Activated T-helper 2 cell treated with anti-CD3 and anti-CD28 coated beads, Interferon-gamma antibody, Interleukin-2, Interleukin-4, amounts not matched to agents 10 μg/mL and 5 μg/mL and 100 μg/mL, durations not matched to agents 14 hours and 24 hours and 36 hours (primary cell): ENCODE measurements at regions of chr11 and their contacts with region 1.

Region 1: GRCh38 chr11:128859563-128860441 is 7.3 kb downstream of the KCNJ1 start:
- DNase-seq: peak; percentile 63
- H3K4me3 Mint-ChIP-seq: no peak overlapping the region
- H3K27ac Mint-ChIP-seq: no peak overlapping the region
- H3K4me1 Mint-ChIP-seq: peaks cover 7% of the 10 kb centered on the region
- H3K27me3 Mint-ChIP-seq: peaks cover 19% of the 10 kb centered on the region

Region 2: DNA sequence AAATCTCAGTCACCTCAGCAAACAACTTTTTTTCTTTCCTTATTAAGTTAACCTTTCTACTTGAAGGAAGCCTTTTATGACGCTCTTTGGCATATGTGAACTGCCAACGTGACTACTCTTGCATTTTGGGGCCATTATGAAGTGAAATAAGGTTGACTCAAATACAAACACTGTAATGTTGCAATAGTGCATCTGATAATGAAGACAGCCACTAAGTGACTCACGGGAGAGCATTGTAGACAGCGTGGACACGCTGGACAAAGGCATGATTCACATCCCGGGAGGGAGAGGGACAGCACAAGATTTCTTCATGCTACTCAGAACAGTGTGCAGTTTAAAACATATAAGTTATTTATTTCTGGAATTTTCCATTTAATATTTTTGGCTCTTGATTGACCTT is 833.2 kb before region 1 on chr11:
- intact Hi-C with region 1: loop called (anchors 1 kb)
- DNase-seq: no peak
- H3K4me3 Mint-ChIP-seq: no peak overlapping the region
- H3K27ac Mint-ChIP-seq: no peak overlapping the region
- H3K4me1 Mint-ChIP-seq: peaks cover 11% of the 10 kb centered on the region
- H3K27me3 Mint-ChIP-seq: peaks cover 46% of the 10 kb centered on the region

Region 3: GRCh38 chr11:128238521-128239265 is 621.1 kb before region 1 on chr11:
- intact Hi-C with region 1: loop called (anchors 10 kb)
- DNase-seq: no peak
- H3K4me3 Mint-ChIP-seq: peak overlapping the region; percentile 22
- H3K27ac Mint-ChIP-seq: peak overlapping the region; percentile 78
- H3K4me1 Mint-ChIP-seq: peaks cover 34% of the 10 kb centered on the region
- H3K27me3 Mint-ChIP-seq: no peaks in the 10 kb centered on the region

Region 4: GRCh38 chr11:128279866-128280265 is 579.9 kb before region 1 on chr11:
- intact Hi-C with region 1: loop called (anchors 10 kb)
- DNase-seq: no peak
- H3K4me3 Mint-ChIP-seq: no peak overlapping the region
- H3K27ac Mint-ChIP-seq: no peak overlapping the region
- H3K4me1 Mint-ChIP-seq: peaks cover 12% of the 10 kb centered on the region
- H3K27me3 Mint-ChIP-seq: peaks cover 5% of the 10 kb centered on the region

Region 5: GRCh38 chr11:128956401-128957201 is 96.8 kb after region 1 on chr11:
- intact Hi-C with region 1: no loop called
- DNase-seq: no peak
- H3K4me3 Mint-ChIP-seq: no peak overlapping the region
- H3K27ac Mint-ChIP-seq: no peak overlapping the region
- H3K4me1 Mint-ChIP-seq: no peaks in the 10 kb centered on the region
- H3K27me3 Mint-ChIP-seq: peaks cover 32% of the 10 kb centered on the region

Region 6: DNA sequence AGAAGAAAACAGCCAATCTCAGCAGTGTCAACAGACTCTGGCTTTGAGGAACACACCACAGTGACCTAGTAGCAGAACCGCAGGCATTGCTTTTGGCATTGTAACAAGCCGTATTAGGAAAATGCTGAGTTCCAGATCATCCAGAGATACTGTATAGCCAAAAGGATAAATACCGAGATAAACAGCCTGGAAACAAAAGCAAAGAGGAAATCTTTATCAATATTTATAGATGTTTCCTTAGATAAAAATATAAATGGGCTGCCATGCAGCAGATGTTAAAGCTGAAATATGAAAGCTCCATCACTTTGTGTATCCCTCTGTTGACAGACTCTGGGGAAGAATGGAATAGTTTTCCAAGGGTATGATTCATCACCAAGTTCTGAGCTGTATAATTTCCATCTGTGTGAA is 181.8 kb after region 1 on chr11:
- intact Hi-C with region 1: no loop called
- DNase-seq: no peak
- H3K4me3 Mint-ChIP-seq: no peak overlapping the region
- H3K27ac Mint-ChIP-seq: no peak overlapping the region
- H3K4me1 Mint-ChIP-seq: no peaks in the 10 kb centered on the region
- H3K27me3 Mint-ChIP-seq: peaks cover 3% of the 10 kb centered on the region